HAP-1 (cell line): ENCODE measurements at regions of chr1 and their contacts with region 1.

Region 1: DNA sequence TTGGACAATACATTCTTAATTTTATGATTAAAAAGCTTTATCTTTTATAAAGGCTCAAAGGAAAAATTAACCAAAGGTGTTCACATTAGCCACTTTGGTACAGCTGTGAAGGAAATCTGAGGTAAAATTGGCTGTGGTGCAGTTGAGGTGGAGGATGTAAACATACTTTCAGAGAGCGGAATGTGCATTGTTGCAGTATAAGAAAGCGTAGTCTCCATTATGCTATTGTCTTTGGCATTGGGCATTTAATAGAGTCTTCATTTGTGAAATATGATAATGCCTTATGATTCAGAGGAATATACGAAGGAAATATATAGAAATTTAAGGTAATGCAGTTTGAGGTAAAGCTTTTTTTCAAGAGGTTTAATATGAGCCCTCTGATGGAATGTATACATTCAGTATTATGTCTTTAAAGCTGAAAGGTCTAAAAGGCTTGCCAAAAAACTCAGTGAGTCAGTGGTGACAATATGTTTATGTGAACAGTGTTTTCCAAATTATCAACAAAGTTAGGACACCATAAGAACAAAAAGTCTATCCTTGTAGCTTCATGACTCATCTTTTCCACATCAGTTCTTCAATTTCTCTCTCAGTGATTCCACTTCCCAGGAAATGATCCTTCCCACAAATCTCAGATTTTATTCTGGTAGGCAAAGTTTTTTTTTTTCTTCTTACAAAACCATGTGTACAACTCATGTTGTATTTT is 26.9 kb upstream of the DDR2 start:
- DNase-seq: no peak
- H3K4me3 ChIP-seq: no peak overlapping the region
- H3K4me1 ChIP-seq: no peaks in the 10 kb centered on the region
- H3K27me3 ChIP-seq: no peaks in the 10 kb centered on the region

Region 2: GRCh38 chr1:162779043-162779442 is 173.7 kb after region 1 on chr1:
- in situ Hi-C with region 1: loop called (anchors 25 kb)
- DNase-seq: no peak
- H3K4me3 ChIP-seq: no peak overlapping the region
- H3K4me1 ChIP-seq: peaks cover 4% of the 10 kb centered on the region
- H3K27me3 ChIP-seq: no peaks in the 10 kb centered on the region